ENCODE measurements at regions of chr2 and their contacts with region 1.

Region 1: DNA sequence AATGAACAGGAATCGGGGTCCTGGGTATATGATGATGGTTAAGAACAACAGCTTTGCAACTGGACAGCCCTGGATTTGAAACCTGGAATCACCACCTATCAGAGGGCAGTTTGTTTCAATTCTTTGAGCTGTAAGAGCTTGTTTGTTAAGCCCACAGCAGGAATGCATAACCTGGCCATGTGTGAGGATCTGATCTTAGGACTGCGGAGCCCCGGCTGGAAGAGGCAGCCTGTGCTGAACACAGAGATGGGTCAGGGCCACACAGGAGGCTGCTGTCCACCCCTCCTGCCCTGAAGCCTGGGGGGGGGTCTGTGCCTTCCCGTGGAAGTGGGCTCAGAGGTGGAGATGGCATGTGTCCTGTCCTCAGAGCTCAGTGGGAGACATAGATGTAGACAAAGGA is 24.3 kb downstream of the TPO start:
- DNase-seq: no peak
- H3K4me3 ChIP-seq: no peak overlapping the region
- H3K27ac ChIP-seq: no peak overlapping the region
- H3K4me1 ChIP-seq: no peaks in the 10 kb centered on the region
- H3K27me3 ChIP-seq: no peaks in the 10 kb centered on the region
- CTCF ChIP-seq: no peak

Region 2: GRCh38 chr2:1381644-1382043 is 55.9 kb before region 1 on chr2:
- CTCF ChIA-PET with region 1: no interaction called
- dilution Hi-C with region 1: loop called (anchors 5 kb)
- in situ Hi-C with region 1: no loop called
- intact Hi-C with region 1: no loop called
- DNase-seq: no peak
- H3K4me3 ChIP-seq: no peak overlapping the region
- H3K27ac ChIP-seq: no peak overlapping the region
- H3K4me1 ChIP-seq: no peaks in the 10 kb centered on the region
- H3K27me3 ChIP-seq: no peaks in the 10 kb centered on the region
- CTCF ChIP-seq: no peak

Region 3: DNA sequence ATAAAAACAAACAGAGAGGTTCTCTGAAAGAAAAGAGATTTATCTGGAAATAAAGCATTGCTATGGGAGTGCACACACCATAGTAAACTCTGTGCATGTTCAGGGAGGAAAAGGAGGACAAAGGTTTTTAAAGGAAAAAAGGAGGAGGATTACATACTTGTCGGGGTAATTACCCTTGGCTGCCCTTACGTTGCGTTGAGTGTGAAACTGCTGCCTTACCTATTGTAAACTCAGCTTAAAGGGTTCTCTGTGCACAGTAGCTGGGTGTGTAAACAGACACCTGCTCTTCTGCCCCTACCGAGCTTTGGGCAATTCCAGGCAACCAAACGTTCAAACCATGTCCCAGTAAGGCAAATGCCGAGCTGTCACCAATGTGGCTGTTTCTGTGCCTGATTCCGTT is 336.3 kb after region 1 on chr2:
- CTCF ChIA-PET with region 1: no interaction called
- dilution Hi-C with region 1: no loop called
- in situ Hi-C with region 1: no loop called
- intact Hi-C with region 1: no loop called
- DNase-seq: no peak
- H3K4me3 ChIP-seq: no peak overlapping the region
- H3K27ac ChIP-seq: no peak overlapping the region
- H3K4me1 ChIP-seq: no peaks in the 10 kb centered on the region
- H3K27me3 ChIP-seq: no peaks in the 10 kb centered on the region
- CTCF ChIP-seq: no peak

Measured in mammary epithelial cell (primary cell).